T-cell (primary cell): ENCODE measurements at regions of chr10 and their contacts with region 1.

Region 1: GRCh38 chr10:80509403-80510161 is 28.1 kb upstream of the SH2D4B start:
- DNase-seq: peak in 1 of 35 experiments; percentile 12
- ATAC-seq: no peak
- H3K4me3 ChIP-seq: no peak overlapping the region
- H3K4me3 Mint-ChIP-seq: no peak overlapping the region
- H3K27ac ChIP-seq: no peak overlapping the region
- H3K27ac Mint-ChIP-seq: peak overlapping the region; percentile 80 to 84
- H3K4me1 ChIP-seq: peaks cover 12 to 51% of the 10 kb centered on the region in 2 experiments
- H3K4me1 Mint-ChIP-seq: peaks cover 47 to 62% (median 49%) of the 10 kb centered on the region in 3 donors
- H3K27me3 ChIP-seq: no peaks in the 10 kb centered on the region
- H3K27me3 Mint-ChIP-seq: no peaks in the 10 kb centered on the region

Region 2: DNA sequence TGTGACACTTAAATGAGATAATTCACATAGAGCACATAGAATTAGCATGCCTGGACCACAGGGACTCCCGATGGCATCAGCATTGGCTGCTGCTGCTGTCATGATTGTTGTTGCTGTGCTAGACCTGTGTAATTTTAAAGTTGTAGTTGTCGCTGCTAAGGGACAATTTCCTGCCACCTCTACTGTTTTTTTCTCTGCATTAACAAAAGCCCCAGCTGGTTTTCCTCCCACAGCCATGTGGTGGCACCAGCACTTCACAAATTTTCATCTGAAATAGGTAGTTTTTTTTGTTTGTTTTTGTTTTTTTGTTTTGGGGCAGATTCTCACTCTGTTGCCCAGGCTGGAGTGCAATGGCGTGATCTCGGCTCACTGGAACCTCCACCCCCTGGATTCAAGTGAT is 126.6 kb before region 1 on chr10:
- CTCF ChIA-PET with region 1: interaction called, 11 to 32 read pairs
- POLR2A ChIA-PET with region 1: interaction called in 1 of 2 experiments, 3 read pairs
- DNase-seq: peak; percentile 20 to 74 (median 49)
- ATAC-seq: peak in 3 of 4 experiments; percentile 51 to 58 (median 55)
- H3K4me3 ChIP-seq: no peak overlapping the region
- H3K4me3 Mint-ChIP-seq: peak overlapping the region in 1 of 3 donors; percentile 7
- H3K27ac ChIP-seq: no peak overlapping the region
- H3K27ac Mint-ChIP-seq: peak overlapping the region; percentile 72 to 82
- H3K4me1 ChIP-seq: peaks cover 4 to 10% of the 10 kb centered on the region in 2 experiments
- H3K4me1 Mint-ChIP-seq: peaks cover 16 to 19% (median 18%) of the 10 kb centered on the region in 3 donors
- H3K27me3 ChIP-seq: no peaks in the 10 kb centered on the region
- H3K27me3 Mint-ChIP-seq: peaks cover 0 to 3% of the 10 kb centered on the region in 2 donors

Region 3: DNA sequence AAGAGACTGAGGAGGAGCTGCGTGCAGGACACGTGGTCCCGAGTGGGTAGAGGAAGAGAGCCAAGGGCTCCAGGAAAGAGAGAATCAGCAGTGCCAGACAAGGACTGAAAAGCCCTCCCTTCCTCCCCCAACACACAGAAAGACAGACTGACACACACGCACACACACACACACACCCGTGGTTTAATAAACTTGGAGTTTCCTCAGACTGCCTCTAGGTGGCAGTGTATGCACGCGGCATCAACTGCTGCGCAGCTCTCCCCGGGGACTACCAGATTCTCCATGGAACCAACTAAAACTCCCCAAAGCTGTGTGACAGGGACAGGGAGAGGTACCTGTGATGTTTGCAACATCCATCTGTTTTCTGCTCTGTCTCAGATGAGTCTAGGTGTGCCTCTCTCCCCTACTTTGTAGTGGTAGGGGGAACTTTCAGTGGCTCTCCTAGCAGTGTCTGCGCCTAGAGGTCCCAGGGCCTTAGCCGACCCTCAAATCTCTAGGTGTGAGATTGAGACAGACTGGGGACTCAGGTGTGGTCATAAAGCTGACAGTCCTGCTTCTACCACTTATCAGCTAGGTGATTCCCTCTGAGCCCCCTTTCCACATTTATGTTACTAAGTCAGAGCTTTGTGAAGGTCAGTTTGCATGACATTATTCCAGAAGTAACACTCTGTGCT is 64.8 kb before region 1 on chr10:
- CTCF ChIA-PET with region 1: interaction called, 72 to 109 read pairs
- POLR2A ChIA-PET with region 1: interaction called in 1 of 2 experiments, 3 read pairs
- DNase-seq: peak in 17 of 35 experiments; percentile 32 to 85 (median 60)
- ATAC-seq: peak; percentile 78 to 86 (median 82)
- H3K4me3 ChIP-seq: no peak overlapping the region
- H3K4me3 Mint-ChIP-seq: peak overlapping the region in 1 of 3 donors; percentile 66
- H3K27ac ChIP-seq: no peak overlapping the region
- H3K27ac Mint-ChIP-seq: peak overlapping the region; percentile 85 to 89
- H3K4me1 ChIP-seq: peaks cover 12 to 22% of the 10 kb centered on the region in 2 experiments
- H3K4me1 Mint-ChIP-seq: peaks cover 47 to 63% (median 51%) of the 10 kb centered on the region in 3 donors
- H3K27me3 ChIP-seq: no peaks in the 10 kb centered on the region
- H3K27me3 Mint-ChIP-seq: no peaks in the 10 kb centered on the region

Region 4: GRCh38 chr10:80459047-80459931 is 50.3 kb before region 1 on chr10:
- CTCF ChIA-PET with region 1: interaction called, 22 to 56 read pairs
- POLR2A ChIA-PET with region 1: interaction called, 3 read pairs
- DNase-seq: peak; percentile 37 to 80 (median 63)
- ATAC-seq: peak; percentile 56 to 61 (median 60)
- H3K4me3 ChIP-seq: peak overlapping the region; percentile 63 to 82
- H3K4me3 Mint-ChIP-seq: peak overlapping the region in 2 of 3 donors; percentile 98 to 99
- H3K27ac ChIP-seq: peak overlapping the region; percentile 82
- H3K27ac Mint-ChIP-seq: peak overlapping the region; percentile 95 to 99
- H3K4me1 ChIP-seq: peaks cover 44 to 91% of the 10 kb centered on the region in 2 experiments
- H3K4me1 Mint-ChIP-seq: peaks cover 85 to 89% (median 87%) of the 10 kb centered on the region in 3 donors
- H3K27me3 ChIP-seq: no peaks in the 10 kb centered on the region
- H3K27me3 Mint-ChIP-seq: no peaks in the 10 kb centered on the region

Region 5: GRCh38 chr10:80472234-80473095 is 37.1 kb before region 1 on chr10:
- CTCF ChIA-PET with region 1: interaction called, 21 to 25 read pairs
- POLR2A ChIA-PET with region 1: interaction called in 1 of 2 experiments, 3 read pairs
- DNase-seq: peak in 1 of 35 experiments; percentile 73
- ATAC-seq: peak; percentile 48 to 60 (median 54)
- H3K4me3 ChIP-seq: peak overlapping the region; percentile 8 to 58
- H3K4me3 Mint-ChIP-seq: peak overlapping the region in 2 of 3 donors; percentile 74
- H3K27ac ChIP-seq: peak overlapping the region; percentile 82
- H3K27ac Mint-ChIP-seq: peak overlapping the region; percentile 95 to 98
- H3K4me1 ChIP-seq: peaks cover 57 to 97% of the 10 kb centered on the region in 2 experiments
- H3K4me1 Mint-ChIP-seq: peaks cover 92 to 93% (median 93%) of the 10 kb centered on the region in 3 donors
- H3K27me3 ChIP-seq: no peaks in the 10 kb centered on the region
- H3K27me3 Mint-ChIP-seq: no peaks in the 10 kb centered on the region

Region 6: GRCh38 chr10:80537086-80537735 is 27.6 kb after region 1 on chr10:
- CTCF ChIA-PET with region 1: interaction called, 3 to 6 read pairs
- POLR2A ChIA-PET with region 1: interaction called in 1 of 2 experiments, 15 read pairs
- DNase-seq: peak in 1 of 35 experiments; percentile 5
- ATAC-seq: no peak
- H3K4me3 ChIP-seq: no peak overlapping the region
- H3K4me3 Mint-ChIP-seq: peak overlapping the region; percentile 75 to 95 (median 83)
- H3K27ac ChIP-seq: no peak overlapping the region
- H3K27ac Mint-ChIP-seq: peak overlapping the region; percentile 76 to 97
- H3K4me1 ChIP-seq: peaks cover 0 to 21% of the 10 kb centered on the region in 2 experiments
- H3K4me1 Mint-ChIP-seq: peaks cover 23 to 31% (median 29%) of the 10 kb centered on the region in 3 donors
- H3K27me3 ChIP-seq: peaks cover 0 to 3% of the 10 kb centered on the region in 2 experiments
- H3K27me3 Mint-ChIP-seq: no peaks in the 10 kb centered on the region

Region 7: GRCh38 chr10:80739328-80739727 is 229.7 kb after region 1 on chr10:
- CTCF ChIA-PET with region 1: no interaction called
- POLR2A ChIA-PET with region 1: no interaction called
- DNase-seq: no peak
- ATAC-seq: no peak
- H3K4me3 ChIP-seq: no peak overlapping the region
- H3K4me3 Mint-ChIP-seq: no peak overlapping the region
- H3K27ac ChIP-seq: no peak overlapping the region
- H3K27ac Mint-ChIP-seq: no peak overlapping the region
- H3K4me1 ChIP-seq: no peaks in the 10 kb centered on the region
- H3K4me1 Mint-ChIP-seq: no peaks in the 10 kb centered on the region
- H3K27me3 ChIP-seq: peaks cover 2 to 5% of the 10 kb centered on the region in 2 experiments
- H3K27me3 Mint-ChIP-seq: peaks cover 10 to 22% of the 10 kb centered on the region in 2 donors